Naive thymus-derived CD4-positive, alpha-beta T cell (primary cell): ENCODE measurements at regions of chr1 and their contacts with region 1.

Region 1: GRCh38 chr1:66350001-66350547 is 183.9 kb upstream of the SGIP1 start:
- DNase-seq: peak in 7 of 9 donors; percentile 55 to 77 (median 71)
- ATAC-seq: peak; percentile 84
- H3K4me3 ChIP-seq: peak overlapping the region; percentile 33
- H3K4me3 Mint-ChIP-seq: peak overlapping the region; percentile 70 to 86 (median 77)
- H3K27ac ChIP-seq: peak overlapping the region; percentile 62
- H3K27ac Mint-ChIP-seq: peak overlapping the region; percentile 81 to 95 (median 90)
- H3K4me1 ChIP-seq: peaks cover 74 to 78% of the 10 kb centered on the region in 2 donors
- H3K4me1 Mint-ChIP-seq: peaks cover 66 to 100% (median 96%) of the 10 kb centered on the region in 7 donors
- H3K27me3 ChIP-seq: no peaks in the 10 kb centered on the region
- H3K27me3 Mint-ChIP-seq: no peaks in the 10 kb centered on the region

Region 2: DNA sequence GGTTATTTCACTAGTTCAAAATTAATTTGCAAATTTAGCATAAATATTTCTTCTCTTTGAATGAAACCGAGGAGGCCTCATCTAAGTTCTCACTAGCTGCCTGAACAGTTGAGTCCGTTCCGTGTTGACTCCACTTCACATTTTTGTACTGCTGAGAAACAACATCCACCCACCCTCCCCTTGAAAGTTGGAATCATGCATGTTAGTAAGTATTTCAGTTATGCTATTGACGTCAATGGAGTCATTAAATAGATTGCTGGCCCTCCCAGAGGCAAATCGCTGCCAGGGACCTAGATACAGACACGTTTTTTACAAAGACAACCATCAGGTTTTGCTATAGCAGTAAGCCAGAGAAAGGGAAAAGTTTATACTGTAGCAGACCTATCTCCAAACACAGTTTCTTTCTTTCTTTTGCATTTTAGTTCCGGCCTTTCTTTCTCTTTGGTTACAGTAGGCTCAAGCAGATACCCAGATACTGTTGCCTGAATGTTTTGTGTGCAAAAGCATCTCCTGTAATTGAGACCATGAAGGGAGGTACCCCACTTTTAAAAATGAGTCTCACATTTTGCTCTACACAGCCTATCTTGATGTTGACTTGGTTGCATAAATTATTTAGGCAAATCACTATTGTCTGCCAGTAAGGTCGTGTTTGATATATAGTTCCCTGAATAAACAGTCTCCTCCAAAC is 78.7 kb before region 1 on chr1:
- CTCF ChIA-PET with region 1: no interaction called
- POLR2A ChIA-PET with region 1: interaction called, 3 read pairs
- intact Hi-C with region 1: loop called in 1 of 2 experiments (anchors 1 kb)
- DNase-seq: peak in 7 of 9 donors; percentile 43 to 72 (median 64)
- ATAC-seq: peak; percentile 64
- H3K4me3 ChIP-seq: no peak overlapping the region
- H3K4me3 Mint-ChIP-seq: peak overlapping the region in 9 of 10 donors; percentile 22 to 69 (median 33)
- H3K27ac ChIP-seq: peak overlapping the region; percentile 59
- H3K27ac Mint-ChIP-seq: peak overlapping the region; percentile 60 to 92 (median 87)
- H3K4me1 ChIP-seq: peaks cover 30 to 43% of the 10 kb centered on the region in 2 donors
- H3K4me1 Mint-ChIP-seq: peaks cover 36 to 69% (median 54%) of the 10 kb centered on the region in 7 donors
- H3K27me3 ChIP-seq: no peaks in the 10 kb centered on the region
- H3K27me3 Mint-ChIP-seq: no peaks in the 10 kb centered on the region

Region 3: GRCh38 chr1:66300972-66301451 is 49.1 kb before region 1 on chr1:
- CTCF ChIA-PET with region 1: no interaction called
- POLR2A ChIA-PET with region 1: interaction called, 9 read pairs
- intact Hi-C with region 1: loop called in 1 of 2 experiments (anchors 1 kb)
- DNase-seq: peak in 7 of 9 donors; percentile 32 to 62 (median 45)
- ATAC-seq: peak; percentile 80
- H3K4me3 ChIP-seq: peak overlapping the region; percentile 12
- H3K4me3 Mint-ChIP-seq: peak overlapping the region; percentile 68 to 92 (median 85)
- H3K27ac ChIP-seq: peak overlapping the region; percentile 5
- H3K27ac Mint-ChIP-seq: peak overlapping the region; percentile 82 to 98 (median 91)
- H3K4me1 ChIP-seq: peaks cover 24 to 29% of the 10 kb centered on the region in 2 donors
- H3K4me1 Mint-ChIP-seq: peaks cover 12 to 46% (median 30%) of the 10 kb centered on the region in 7 donors
- H3K27me3 ChIP-seq: no peaks in the 10 kb centered on the region
- H3K27me3 Mint-ChIP-seq: peaks cover 0 to 3% (median 0%) of the 10 kb centered on the region in 5 donors

Region 4: GRCh38 chr1:66323958-66324625 is 26.0 kb before region 1 on chr1:
- CTCF ChIA-PET with region 1: no interaction called
- POLR2A ChIA-PET with region 1: no interaction called
- intact Hi-C with region 1: no loop called
- DNase-seq: no peak
- ATAC-seq: no peak
- H3K4me3 ChIP-seq: no peak overlapping the region
- H3K4me3 Mint-ChIP-seq: no peak overlapping the region
- H3K27ac ChIP-seq: no peak overlapping the region
- H3K27ac Mint-ChIP-seq: peak overlapping the region in 2 of 9 donors; percentile 3 to 8
- H3K4me1 ChIP-seq: peaks cover 10 to 16% of the 10 kb centered on the region in 2 donors
- H3K4me1 Mint-ChIP-seq: peaks cover 9 to 52% (median 44%) of the 10 kb centered on the region in 7 donors
- H3K27me3 ChIP-seq: no peaks in the 10 kb centered on the region
- H3K27me3 Mint-ChIP-seq: no peaks in the 10 kb centered on the region

Region 5: DNA sequence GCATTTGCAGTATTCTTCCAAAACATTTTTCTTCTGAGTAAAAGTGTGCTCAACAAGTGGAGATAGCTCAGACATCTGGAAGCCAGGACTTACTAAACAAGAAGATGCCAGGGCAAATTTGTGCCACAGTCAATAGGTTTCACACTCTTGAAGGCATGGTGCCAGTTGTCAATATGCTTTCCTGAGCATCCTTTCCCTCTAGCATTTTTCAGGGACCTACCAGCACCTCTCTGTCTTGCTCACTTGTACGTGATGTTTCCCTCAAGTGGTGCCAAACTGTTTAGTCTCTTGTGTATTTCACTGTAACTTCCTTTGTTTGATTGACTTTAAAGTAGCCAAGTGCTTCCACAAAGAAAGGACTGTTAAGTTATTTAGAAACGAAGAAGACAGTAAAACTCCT is 10.1 kb before region 1 on chr1:
- CTCF ChIA-PET with region 1: interaction called, 5 read pairs
- POLR2A ChIA-PET with region 1: interaction called, 49 read pairs
- intact Hi-C with region 1: loop called (anchors 1 kb)
- DNase-seq: peak in 2 of 9 donors; percentile 18 to 30
- ATAC-seq: no peak
- H3K4me3 ChIP-seq: peak overlapping the region; percentile 10
- H3K4me3 Mint-ChIP-seq: peak overlapping the region in 9 of 10 donors; percentile 34 to 83 (median 68)
- H3K27ac ChIP-seq: peak overlapping the region; percentile 1
- H3K27ac Mint-ChIP-seq: peak overlapping the region; percentile 43 to 92 (median 83)
- H3K4me1 ChIP-seq: peaks cover 58 to 62% of the 10 kb centered on the region in 2 donors
- H3K4me1 Mint-ChIP-seq: peaks cover 45 to 89% (median 84%) of the 10 kb centered on the region in 7 donors
- H3K27me3 ChIP-seq: no peaks in the 10 kb centered on the region
- H3K27me3 Mint-ChIP-seq: no peaks in the 10 kb centered on the region

Region 6: DNA sequence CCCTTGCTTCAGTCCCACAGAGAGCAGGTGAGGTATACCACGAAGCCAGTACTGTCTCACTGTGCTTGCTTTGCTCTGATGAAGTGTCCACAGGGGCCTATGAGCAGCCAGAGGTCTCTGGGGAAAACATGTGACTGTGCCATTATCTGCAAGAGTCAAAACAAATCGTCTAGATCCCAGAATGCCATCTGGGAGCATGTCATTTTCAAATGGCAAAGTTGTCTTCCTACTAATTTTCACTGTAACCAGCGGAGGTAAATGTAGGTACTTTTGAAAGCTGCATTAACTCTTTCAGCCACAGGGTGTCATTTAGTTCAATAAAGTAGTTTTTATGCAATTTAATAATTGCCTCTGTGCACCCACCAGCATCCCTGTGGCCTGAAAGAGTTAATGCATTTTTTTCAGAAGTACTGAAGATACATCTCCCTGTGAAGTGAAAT is 10.2 kb after region 1 on chr1:
- CTCF ChIA-PET with region 1: interaction called, 4 read pairs
- POLR2A ChIA-PET with region 1: interaction called, 12 read pairs
- intact Hi-C with region 1: loop called in 1 of 2 experiments (anchors 1 kb)
- DNase-seq: no peak
- ATAC-seq: no peak
- H3K4me3 ChIP-seq: no peak overlapping the region
- H3K4me3 Mint-ChIP-seq: no peak overlapping the region
- H3K27ac ChIP-seq: no peak overlapping the region
- H3K27ac Mint-ChIP-seq: peak overlapping the region in 3 of 9 donors; percentile 45 to 72 (median 58)
- H3K4me1 ChIP-seq: peaks cover 40 to 51% of the 10 kb centered on the region in 2 donors
- H3K4me1 Mint-ChIP-seq: peaks cover 40 to 80% (median 65%) of the 10 kb centered on the region in 7 donors
- H3K27me3 ChIP-seq: no peaks in the 10 kb centered on the region
- H3K27me3 Mint-ChIP-seq: no peaks in the 10 kb centered on the region

Region 7: GRCh38 chr1:66365635-66366034 is 15.6 kb after region 1 on chr1:
- CTCF ChIA-PET with region 1: interaction called, 4 read pairs
- POLR2A ChIA-PET with region 1: interaction called, 12 read pairs
- intact Hi-C with region 1: loop called (anchors 1 to 2 kb)
- DNase-seq: no peak
- ATAC-seq: no peak
- H3K4me3 ChIP-seq: no peak overlapping the region
- H3K4me3 Mint-ChIP-seq: no peak overlapping the region
- H3K27ac ChIP-seq: no peak overlapping the region
- H3K27ac Mint-ChIP-seq: peak overlapping the region in 6 of 9 donors; percentile 23 to 71 (median 39)
- H3K4me1 ChIP-seq: peaks cover 21% of the 10 kb centered on the region in 2 donors
- H3K4me1 Mint-ChIP-seq: peaks cover 23 to 71% (median 54%) of the 10 kb centered on the region in 7 donors
- H3K27me3 ChIP-seq: no peaks in the 10 kb centered on the region
- H3K27me3 Mint-ChIP-seq: no peaks in the 10 kb centered on the region